ENCODE measurements at regions of chrX and their contacts with region 1.

Region 1: GRCh38 chrX:16719334-16720084 is at the start of gene SYAP1:
- DNase-seq: peak; percentile 78 to 96 (median 82)
- ATAC-seq: peak; percentile 93
- H3K4me3 ChIP-seq: peak within 1 kb of the TSS; percentile 82
- H3K27ac ChIP-seq: peak within 1 kb of the TSS; percentile 100
- H3K4me1 ChIP-seq: peaks cover 7 to 11% of the 10 kb centered on the region in 2 experiments; a peak in 3 of 5 replicates
- H3K27me3 ChIP-seq: no peaks in the 10 kb centered on the region
- CTCF ChIP-seq: peak in 1 of 3 experiments; percentile 17; a peak in 1 of 6 replicates
- EP300 ChIP-seq: no peak
- POLR2A ChIP-seq: peak; percentile 95
- RAD21 ChIP-seq: no peak
- polyA plus RNA-seq, gene SYAP1: 5.7 to 6.8 TPM

Region 2: DNA sequence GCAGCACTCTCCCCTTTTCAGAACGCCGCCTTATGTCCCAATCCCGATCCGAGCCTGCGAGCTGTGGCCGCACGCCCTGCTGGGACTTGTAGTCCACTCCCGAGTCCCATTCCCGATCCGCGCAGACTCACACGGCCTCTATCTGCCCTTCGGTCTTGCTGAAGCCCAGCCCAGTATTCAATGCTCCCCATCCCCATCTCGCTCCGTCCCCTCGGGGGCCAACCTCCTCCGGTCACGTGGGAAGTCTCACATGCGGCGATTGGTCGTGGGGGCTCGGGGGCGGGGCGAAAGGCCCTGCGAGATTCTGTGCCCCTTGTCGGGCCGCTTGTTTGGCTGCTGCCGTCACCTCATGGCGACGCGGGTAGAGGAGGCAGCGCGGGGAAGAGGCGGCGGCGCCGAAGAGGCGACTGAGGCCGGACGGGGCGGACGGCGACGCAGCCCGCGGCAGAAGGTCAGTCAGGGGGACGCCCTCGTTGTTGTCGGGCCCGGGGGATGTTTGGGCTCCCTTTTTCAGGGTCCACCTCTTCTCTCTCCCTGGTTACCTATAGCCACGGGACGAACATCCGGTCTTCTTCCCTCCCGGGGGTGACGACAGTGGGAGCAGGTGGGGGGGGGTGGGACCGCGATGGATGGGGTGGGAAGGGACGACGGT is 66.8 kb after region 1 on chrX and contains the start of gene TXLNG:
- CTCF ChIA-PET with region 1: no interaction called
- POLR2A ChIA-PET with region 1: interaction called, 3 read pairs
- in situ Hi-C with region 1: no loop called
- intact Hi-C with region 1: loop called (anchors 2 kb)
- DNase-seq: peak; percentile 90 to 99 (median 94)
- ATAC-seq: peak; percentile 98
- H3K4me3 ChIP-seq: peak within 1 kb of the TSS; percentile 80
- H3K27ac ChIP-seq: peak within 1 kb of the TSS; percentile 90
- H3K4me1 ChIP-seq: peaks cover 7 to 10% of the 10 kb centered on the region in 2 experiments; a peak in 3 of 5 replicates
- H3K27me3 ChIP-seq: no peaks in the 10 kb centered on the region
- CTCF ChIP-seq: no peak
- EP300 ChIP-seq: no peak
- POLR2A ChIP-seq: peak; percentile 92
- RAD21 ChIP-seq: no peak
- polyA plus RNA-seq, gene TXLNG: 13.1 to 21.4 TPM

Region 3: GRCh38 chrX:17242470-17242869 is 523.0 kb after region 1 on chrX:
- CTCF ChIA-PET with region 1: no interaction called
- POLR2A ChIA-PET with region 1: no interaction called
- in situ Hi-C with region 1: no loop called
- intact Hi-C with region 1: no loop called
- DNase-seq: peak; percentile 33 to 43 (median 37)
- ATAC-seq: peak; percentile 77
- H3K4me3 ChIP-seq: no peak overlapping the region
- H3K27ac ChIP-seq: no peak overlapping the region
- H3K4me1 ChIP-seq: no peaks in the 10 kb centered on the region
- H3K27me3 ChIP-seq: no peaks in the 10 kb centered on the region
- CTCF ChIP-seq: peak; percentile 40 to 68 (median 57); a peak in 5 of 6 replicates
- EP300 ChIP-seq: no peak
- POLR2A ChIP-seq: no peak
- RAD21 ChIP-seq: peak in 1 of 2 experiments; percentile 66; a peak in 3 of 4 replicates